ENCODE measurements at regions of chr1 and their contacts with region 1.

Region 1: DNA sequence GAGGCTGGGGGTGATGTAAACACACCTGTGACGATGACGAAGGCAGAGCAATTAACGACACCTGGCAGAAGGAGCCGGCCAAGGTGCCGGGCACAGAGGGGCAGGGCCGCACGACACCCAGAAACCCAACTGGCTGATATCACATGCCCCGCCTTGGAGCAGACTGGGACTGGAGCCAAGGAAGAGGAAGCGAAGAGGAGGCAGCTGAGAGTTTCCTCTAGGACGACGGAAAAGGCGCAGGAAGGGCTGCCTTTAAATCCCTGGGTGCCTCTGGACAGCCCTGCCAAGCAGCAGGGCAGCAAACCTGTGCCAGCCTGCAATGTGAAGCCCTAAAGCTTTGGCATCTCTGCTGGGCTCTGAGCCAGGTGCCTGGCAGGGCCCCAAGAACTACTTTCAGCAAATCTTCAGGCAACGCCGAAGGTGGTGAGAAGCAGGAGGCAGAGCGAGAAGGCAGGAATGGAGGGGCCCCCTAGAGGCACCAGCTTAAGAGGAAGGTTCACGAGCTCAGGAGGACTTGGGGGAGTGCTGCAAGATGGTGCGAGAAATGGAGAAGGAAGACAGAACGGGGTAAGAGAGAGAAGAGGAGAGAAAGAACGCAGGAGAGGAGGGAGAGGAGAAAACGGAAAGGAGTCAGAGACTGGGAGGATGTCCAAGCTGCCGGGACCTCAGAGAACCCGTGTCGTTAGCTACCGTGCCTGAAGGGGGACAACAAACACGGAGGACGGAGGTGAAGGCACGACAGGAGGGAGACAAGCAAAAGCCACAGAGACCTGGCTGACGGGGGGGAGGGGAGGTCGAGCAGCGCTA is 25.3 kb upstream of the PEF1 start:
- DNase-seq: peak; percentile 77
- ATAC-seq: peak; percentile 70
- H3K4me3 ChIP-seq: peak overlapping the region; percentile 60
- H3K27ac ChIP-seq: peak overlapping the region; percentile 43
- H3K4me1 ChIP-seq: peaks cover 28% of the 10 kb centered on the region
- H3K27me3 ChIP-seq: no peaks in the 10 kb centered on the region
- CTCF ChIP-seq: peak; percentile 60

Region 2: DNA sequence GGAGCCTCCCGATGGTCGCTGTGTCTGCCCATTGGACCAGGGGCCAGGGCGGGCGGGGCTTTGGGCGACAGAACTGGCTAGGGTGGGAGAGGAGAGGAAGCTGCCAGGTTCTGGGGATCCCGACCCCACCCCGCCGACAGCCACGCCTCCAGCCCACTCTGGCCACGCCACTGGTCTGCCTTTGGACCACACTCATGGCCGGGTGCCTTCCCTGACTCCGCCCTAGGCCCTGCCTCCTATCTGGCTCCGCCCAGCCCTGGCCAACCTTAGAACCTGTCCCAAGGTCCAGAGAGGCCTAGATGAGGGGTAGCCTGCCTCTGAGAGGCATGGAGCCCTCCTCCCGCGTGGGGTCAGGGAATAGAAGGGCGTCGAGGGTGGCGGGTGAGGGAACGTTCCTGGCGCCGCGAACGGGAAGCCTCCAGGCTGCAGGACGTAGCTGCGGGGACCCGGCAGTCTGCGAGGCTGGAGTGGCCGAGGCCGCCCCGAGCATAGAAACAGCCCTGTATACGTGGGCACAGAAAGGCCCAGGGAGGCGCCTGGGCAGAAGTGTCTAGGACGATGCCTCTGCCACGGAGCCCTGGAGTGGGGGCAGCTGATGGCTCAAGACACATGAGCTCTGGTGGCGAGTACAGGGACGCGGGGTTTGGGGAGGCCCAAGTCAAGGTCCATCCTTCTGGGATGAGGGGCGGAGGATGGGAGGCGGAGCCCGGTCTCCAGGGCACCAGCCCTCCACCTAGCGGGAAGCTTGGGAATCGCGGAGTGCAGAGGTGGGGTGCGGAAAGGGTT is 45.3 kb after region 1 on chr1:
- CTCF ChIA-PET with region 1: no interaction called
- POLR2A ChIA-PET with region 1: no interaction called
- intact Hi-C with region 1: loop called (anchors 1 kb)
- DNase-seq: peak; percentile 87
- ATAC-seq: peak; percentile 93
- H3K4me3 ChIP-seq: peak overlapping the region; percentile 66
- H3K27ac ChIP-seq: peak overlapping the region; percentile 60
- H3K4me1 ChIP-seq: peaks cover 53% of the 10 kb centered on the region
- H3K27me3 ChIP-seq: no peaks in the 10 kb centered on the region
- CTCF ChIP-seq: peak; percentile 77

Region 3: GRCh38 chr1:31762726-31763670 is 93.0 kb after region 1 on chr1:
- CTCF ChIA-PET with region 1: interaction called, 3 read pairs
- POLR2A ChIA-PET with region 1: interaction called, 3 read pairs
- intact Hi-C with region 1: loop called (anchors 2 kb)
- DNase-seq: peak; percentile 76
- ATAC-seq: peak; percentile 56
- H3K4me3 ChIP-seq: peak overlapping the region; percentile 78
- H3K27ac ChIP-seq: no peak overlapping the region
- H3K4me1 ChIP-seq: peaks cover 24% of the 10 kb centered on the region
- H3K27me3 ChIP-seq: no peaks in the 10 kb centered on the region
- CTCF ChIP-seq: peak; percentile 69